PC-9 (cell line): ENCODE measurements at regions of chr14 and their contacts with region 1.

Region 1: DNA sequence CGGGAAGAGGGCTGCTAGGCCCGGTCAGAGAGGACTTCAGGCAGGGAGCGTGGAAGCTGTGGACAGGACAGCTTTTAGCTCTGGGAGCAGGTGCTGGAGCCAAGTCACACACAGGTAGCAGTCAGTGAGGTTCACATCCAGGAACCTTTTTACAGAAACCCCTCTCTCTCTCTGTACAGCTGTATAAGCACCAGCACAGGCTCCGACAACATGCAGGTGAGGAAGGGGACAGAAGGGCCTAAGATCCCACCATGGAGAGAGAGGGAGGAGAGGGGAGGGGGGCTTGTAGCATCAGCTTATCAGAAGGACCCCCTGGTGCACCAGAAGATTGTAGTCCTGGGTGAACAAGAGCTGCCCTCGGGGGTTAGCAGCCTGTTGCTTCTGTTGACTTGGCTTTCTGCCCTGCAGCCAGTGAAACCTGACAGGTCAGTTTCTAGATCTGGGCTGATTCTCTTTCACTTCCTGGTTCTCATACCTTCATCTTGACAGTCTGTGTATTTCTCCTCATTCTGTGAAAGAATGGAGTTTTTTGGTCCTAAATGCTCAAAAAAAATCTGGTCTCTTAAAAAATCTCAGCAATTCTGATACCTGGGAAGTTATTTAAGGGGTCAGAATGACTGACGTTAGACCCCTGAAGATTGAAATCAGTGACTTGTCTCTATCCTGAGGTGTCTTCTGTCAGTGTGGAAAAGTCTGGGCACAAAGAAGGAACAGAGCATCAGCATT is 23.6 kb downstream of the TTC9 start:
- DNase-seq: peak; percentile 93 to 96
- H3K4me3 ChIP-seq: peak overlapping the region; percentile 55
- H3K27ac ChIP-seq: peak overlapping the region; percentile 99
- H3K4me1 ChIP-seq: peaks cover 71% of the 10 kb centered on the region
- H3K27me3 ChIP-seq: no peaks in the 10 kb centered on the region
- CTCF ChIP-seq: 0 out of 2 replicates have a peak, but pooled peaks have one; percentile 13

Region 2: GRCh38 chr14:70162358-70162757 is 503.0 kb before region 1 on chr14:
- CTCF ChIA-PET with region 1: no interaction called
- POLR2A ChIA-PET with region 1: no interaction called
- intact Hi-C with region 1: no loop called
- DNase-seq: no peak
- H3K4me3 ChIP-seq: no peak overlapping the region
- H3K27ac ChIP-seq: no peak overlapping the region
- H3K4me1 ChIP-seq: no peaks in the 10 kb centered on the region
- H3K27me3 ChIP-seq: peaks cover 78% of the 10 kb centered on the region
- CTCF ChIP-seq: no peak

Region 3: GRCh38 chr14:70600382-70601157 is 64.8 kb before region 1 on chr14 and contains the start of gene MED6:
- CTCF ChIA-PET with region 1: no interaction called
- POLR2A ChIA-PET with region 1: no interaction called
- intact Hi-C with region 1: loop called (anchors 2 kb)
- DNase-seq: peak; percentile 86 to 91
- H3K4me3 ChIP-seq: peak within 1 kb of the TSS; percentile 68
- H3K27ac ChIP-seq: peak within 1 kb of the TSS; percentile 58
- H3K4me1 ChIP-seq: peaks cover 19% of the 10 kb centered on the region
- H3K27me3 ChIP-seq: no peaks in the 10 kb centered on the region
- CTCF ChIP-seq: no peak
- total RNA-seq, gene MED6: 46.5 and 58.2 TPM in 2 replicates

Region 4: GRCh38 chr14:70622111-70622712 is 43.1 kb before region 1 on chr14:
- CTCF ChIA-PET with region 1: no interaction called
- POLR2A ChIA-PET with region 1: no interaction called
- intact Hi-C with region 1: loop called (anchors 1 kb)
- DNase-seq: peak in 1 of 2 experiments; percentile 54
- H3K4me3 ChIP-seq: no peak overlapping the region
- H3K27ac ChIP-seq: no peak overlapping the region
- H3K4me1 ChIP-seq: peaks cover under 1% of the 10 kb centered on the region; the same call in 1 of the 2 replicates
- H3K27me3 ChIP-seq: no peaks in the 10 kb centered on the region
- CTCF ChIP-seq: peak; percentile 94

Region 5: GRCh38 chr14:70640938-70641547 is 24.3 kb before region 1 on chr14:
- CTCF ChIA-PET with region 1: interaction called, 3 read pairs
- POLR2A ChIA-PET with region 1: no interaction called
- intact Hi-C with region 1: loop called (anchors 1 kb)
- DNase-seq: peak; percentile 47 to 77
- H3K4me3 ChIP-seq: peak overlapping the region; percentile 97
- H3K27ac ChIP-seq: 0 out of 2 replicates have a peak overlapping the region, but pooled peaks have one; percentile 1
- H3K4me1 ChIP-seq: peaks cover 32% of the 10 kb centered on the region
- H3K27me3 ChIP-seq: no peaks in the 10 kb centered on the region
- CTCF ChIP-seq: no peak

Region 6: GRCh38 chr14:70698288-70698687 is 32.9 kb after region 1 on chr14:
- CTCF ChIA-PET with region 1: no interaction called
- POLR2A ChIA-PET with region 1: interaction called, 3 read pairs
- intact Hi-C with region 1: loop called (anchors 1 kb)
- DNase-seq: peak; percentile 73 to 87
- H3K4me3 ChIP-seq: peak overlapping the region; percentile 22; the same call in 1 of the 2 replicates
- H3K27ac ChIP-seq: peak overlapping the region; percentile 97
- H3K4me1 ChIP-seq: peaks cover 45% of the 10 kb centered on the region
- H3K27me3 ChIP-seq: no peaks in the 10 kb centered on the region
- CTCF ChIP-seq: no peak

Region 7: GRCh38 chr14:70707138-70708038 is 42.0 kb after region 1 on chr14:
- CTCF ChIA-PET with region 1: no interaction called
- POLR2A ChIA-PET with region 1: interaction called, 3 read pairs
- intact Hi-C with region 1: loop called (anchors 1 kb)
- DNase-seq: peak; percentile 81 to 92
- H3K4me3 ChIP-seq: no peak overlapping the region
- H3K27ac ChIP-seq: peak overlapping the region; percentile 67
- H3K4me1 ChIP-seq: peaks cover 22% of the 10 kb centered on the region
- H3K27me3 ChIP-seq: no peaks in the 10 kb centered on the region
- CTCF ChIP-seq: no peak

Region 8: GRCh38 chr14:70754989-70755388 is 89.6 kb after region 1 on chr14:
- CTCF ChIA-PET with region 1: no interaction called
- POLR2A ChIA-PET with region 1: no interaction called
- intact Hi-C with region 1: loop called (anchors 1 kb)
- DNase-seq: peak; percentile 96 to 99
- H3K4me3 ChIP-seq: no peak overlapping the region
- H3K27ac ChIP-seq: peak overlapping the region; percentile 87
- H3K4me1 ChIP-seq: peaks cover 36% of the 10 kb centered on the region
- H3K27me3 ChIP-seq: no peaks in the 10 kb centered on the region
- CTCF ChIP-seq: no peak